PC-9 (cell line): ENCODE measurements at regions of chr1 and their contacts with region 1.

Region 1: DNA sequence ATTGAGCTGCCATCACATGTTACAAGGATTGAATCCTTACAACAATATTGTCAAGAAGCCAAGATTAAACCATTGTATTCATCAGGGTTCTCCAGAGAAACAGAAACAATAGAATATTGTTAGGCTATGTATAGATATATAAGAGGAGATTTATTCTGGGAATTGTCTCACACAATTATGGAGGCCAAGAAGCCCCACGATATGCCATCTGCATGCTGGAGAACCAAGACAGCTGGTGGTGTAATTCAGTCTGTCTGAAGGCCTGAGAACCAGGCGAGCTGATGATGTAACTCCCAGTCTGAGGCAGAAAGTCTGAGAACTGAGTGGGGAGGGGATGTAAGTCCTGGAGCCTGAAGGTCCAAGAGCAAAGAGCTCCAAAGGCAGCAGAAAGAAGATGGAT is 14.5 kb upstream of the TTF2 start:
- DNase-seq: no peak
- H3K4me3 ChIP-seq: no peak overlapping the region
- H3K27ac ChIP-seq: no peak overlapping the region
- H3K4me1 ChIP-seq: no peaks in the 10 kb centered on the region
- H3K27me3 ChIP-seq: no peaks in the 10 kb centered on the region
- CTCF ChIP-seq: no peak

Region 2: GRCh38 chr1:116133696-116134650 is 911.7 kb before region 1 on chr1:
- CTCF ChIA-PET with region 1: no interaction called
- POLR2A ChIA-PET with region 1: no interaction called
- intact Hi-C with region 1: no loop called
- DNase-seq: no peak
- H3K4me3 ChIP-seq: no peak overlapping the region
- H3K27ac ChIP-seq: no peak overlapping the region
- H3K4me1 ChIP-seq: peaks cover 6% of the 10 kb centered on the region
- H3K27me3 ChIP-seq: no peaks in the 10 kb centered on the region
- CTCF ChIP-seq: peak; percentile 45; the same call in 1 of the 2 replicates

Region 3: DNA sequence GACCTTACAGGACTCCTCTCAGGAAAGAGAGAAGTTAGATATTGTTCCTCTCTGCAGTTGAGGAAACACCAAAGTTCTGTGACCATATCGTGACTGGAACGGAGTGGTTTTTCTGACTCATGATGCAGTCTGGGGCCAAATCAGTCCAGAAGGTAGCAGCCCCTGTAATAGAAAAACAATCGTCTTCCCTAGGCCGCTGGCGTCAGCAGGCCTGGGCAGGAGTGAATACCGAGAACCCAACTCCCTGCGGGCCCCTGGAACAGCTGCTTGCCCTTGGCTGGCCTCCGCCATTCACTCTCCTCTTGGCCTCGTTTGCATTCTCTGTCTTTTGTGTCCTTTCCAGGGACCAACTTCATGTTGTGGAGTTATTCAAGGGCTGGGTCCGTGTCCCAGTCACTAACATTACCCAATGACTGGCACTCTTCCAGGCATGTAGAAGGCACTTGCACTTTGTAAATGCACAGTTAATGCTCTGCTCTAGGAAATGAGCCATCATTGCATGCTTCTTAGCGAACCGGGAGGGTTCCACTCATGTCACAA is 55.0 kb before region 1 on chr1:
- CTCF ChIA-PET with region 1: no interaction called
- POLR2A ChIA-PET with region 1: no interaction called
- intact Hi-C with region 1: loop called (anchors 10 kb)
- DNase-seq: no peak
- H3K4me3 ChIP-seq: no peak overlapping the region
- H3K27ac ChIP-seq: no peak overlapping the region
- H3K4me1 ChIP-seq: no peaks in the 10 kb centered on the region
- H3K27me3 ChIP-seq: no peaks in the 10 kb centered on the region
- CTCF ChIP-seq: no peak